Heart left ventricle (tissue), 16 donors: ENCODE measurements at regions of chr5 and their contacts with region 1.

Region 1: GRCh38 chr5:55613112-55613868 is 78.5 kb upstream of the PLPP1 start:
- DNase-seq: no peak
- ATAC-seq: no peak
- H3K4me3 ChIP-seq: no peak overlapping the region
- H3K27ac ChIP-seq: no peak overlapping the region
- H3K4me1 ChIP-seq: no peaks in the 10 kb centered on the region
- H3K27me3 ChIP-seq: no peaks in the 10 kb centered on the region
- CTCF ChIP-seq: no peak
- POLR2A ChIP-seq: no peak

Region 2: GRCh38 chr5:55597014-55597981 is 16.0 kb before region 1 on chr5:
- intact Hi-C with region 1: no loop called
- DNase-seq: peak; percentile 63 to 72 (median 67)
- ATAC-seq: peak in 3 of 4 donors; percentile 5 to 28 (median 26)
- H3K4me3 ChIP-seq: no peak overlapping the region
- H3K27ac ChIP-seq: peak overlapping the region; percentile 68 to 99 (median 92)
- H3K4me1 ChIP-seq: peaks cover 18 to 70% (median 60%) of the 10 kb centered on the region in 12 donors
- H3K27me3 ChIP-seq: no peaks in the 10 kb centered on the region
- CTCF ChIP-seq: no peak
- POLR2A ChIP-seq: no peak

Region 3: DNA sequence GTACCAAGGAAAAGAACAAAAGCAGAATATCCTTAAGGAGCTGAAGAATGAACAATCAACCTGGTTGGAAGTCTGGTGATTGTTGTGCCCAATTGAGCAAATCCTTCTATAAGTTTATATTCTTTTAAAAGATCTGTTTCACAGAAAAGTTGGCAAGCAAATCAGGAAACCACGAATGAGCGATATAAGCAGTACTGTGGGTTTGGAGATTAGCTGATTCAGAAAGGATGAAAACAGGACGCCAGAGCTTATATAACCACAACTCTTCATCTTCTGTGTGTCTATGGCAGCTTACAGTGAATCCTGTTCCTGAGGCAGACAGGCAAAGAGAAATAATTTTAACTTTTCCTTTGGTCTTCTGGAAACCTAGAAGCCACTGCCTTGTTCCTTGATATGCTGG is 37.1 kb after region 1 on chr5:
- intact Hi-C with region 1: loop called in 1 of 10 experiments (anchors 2 kb)
- DNase-seq: no peak
- ATAC-seq: no peak
- H3K4me3 ChIP-seq: no peak overlapping the region
- H3K27ac ChIP-seq: no peak overlapping the region
- H3K4me1 ChIP-seq: peaks cover 0 to under 1% (median 0%) of the 10 kb centered on the region in 12 donors
- H3K27me3 ChIP-seq: no peaks in the 10 kb centered on the region
- CTCF ChIP-seq: no peak
- POLR2A ChIP-seq: no peak

Region 4: DNA sequence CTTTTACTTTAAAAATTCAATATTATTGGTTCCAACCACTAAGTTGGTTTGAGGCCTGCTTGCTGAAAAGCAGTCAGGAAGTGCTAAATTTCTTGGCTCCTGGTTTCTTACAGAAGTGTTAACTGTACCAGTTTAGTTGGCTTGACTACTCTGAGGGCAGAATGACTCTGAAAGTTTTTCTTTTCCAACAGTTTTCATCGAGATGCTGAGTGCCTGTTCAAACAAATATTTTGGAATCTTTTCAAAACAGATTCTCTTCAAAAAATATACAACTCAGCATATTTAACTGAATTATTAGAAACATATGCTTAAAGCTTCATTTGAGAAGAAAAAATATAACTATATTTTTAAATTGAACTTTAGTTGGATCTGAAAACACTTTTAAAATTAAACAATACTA is 61.8 kb after region 1 on chr5:
- intact Hi-C with region 1: loop called in 4 of 10 experiments (anchors 5 to 10 kb)
- DNase-seq: no peak
- ATAC-seq: no peak
- H3K4me3 ChIP-seq: no peak overlapping the region
- H3K27ac ChIP-seq: peak overlapping the region in 5 of 12 donors; percentile 1 to 53 (median 11)
- H3K4me1 ChIP-seq: peaks cover 0 to 39% (median 14%) of the 10 kb centered on the region in 12 donors
- H3K27me3 ChIP-seq: no peaks in the 10 kb centered on the region
- CTCF ChIP-seq: no peak
- POLR2A ChIP-seq: no peak

Region 5: DNA sequence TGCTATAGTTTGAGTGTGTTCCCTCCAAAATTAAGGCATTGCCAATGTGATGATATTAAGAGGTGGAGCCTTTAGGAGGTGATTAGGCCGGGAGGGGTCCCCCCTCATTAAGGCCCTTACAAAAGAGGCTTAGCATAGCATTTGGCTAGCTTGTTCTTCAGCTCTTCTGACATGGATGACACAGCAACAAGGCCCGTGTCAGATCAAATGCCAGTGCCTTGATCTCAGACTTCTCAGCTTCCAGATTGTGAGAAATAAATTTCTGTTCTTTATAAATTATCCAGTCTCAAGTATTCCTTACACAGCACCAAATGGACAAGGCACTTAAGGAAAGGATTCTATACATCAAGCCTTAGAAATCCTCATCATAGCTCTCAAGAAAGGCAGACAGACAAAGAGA is 67.1 kb after region 1 on chr5:
- intact Hi-C with region 1: loop called in 4 of 10 experiments (anchors 5 to 10 kb)
- DNase-seq: no peak
- ATAC-seq: peak in 1 of 4 donors; percentile 41
- H3K4me3 ChIP-seq: no peak overlapping the region
- H3K27ac ChIP-seq: peak overlapping the region in 6 of 12 donors; percentile 11 to 56 (median 27)
- H3K4me1 ChIP-seq: peaks cover 0 to 32% (median 16%) of the 10 kb centered on the region in 12 donors
- H3K27me3 ChIP-seq: no peaks in the 10 kb centered on the region
- CTCF ChIP-seq: no peak
- POLR2A ChIP-seq: no peak

Region 6: GRCh38 chr5:56229111-56229510 is 615.8 kb after region 1 on chr5:
- intact Hi-C with region 1: no loop called
- DNase-seq: no peak
- ATAC-seq: no peak
- H3K4me3 ChIP-seq: no peak overlapping the region
- H3K27ac ChIP-seq: no peak overlapping the region
- H3K4me1 ChIP-seq: peaks cover 0 to 4% (median 0%) of the 10 kb centered on the region in 12 donors
- H3K27me3 ChIP-seq: no peaks in the 10 kb centered on the region
- CTCF ChIP-seq: no peak
- POLR2A ChIP-seq: no peak